ENCODE measurements at regions of chr11 and their contacts with region 1.

Region 1: DNA sequence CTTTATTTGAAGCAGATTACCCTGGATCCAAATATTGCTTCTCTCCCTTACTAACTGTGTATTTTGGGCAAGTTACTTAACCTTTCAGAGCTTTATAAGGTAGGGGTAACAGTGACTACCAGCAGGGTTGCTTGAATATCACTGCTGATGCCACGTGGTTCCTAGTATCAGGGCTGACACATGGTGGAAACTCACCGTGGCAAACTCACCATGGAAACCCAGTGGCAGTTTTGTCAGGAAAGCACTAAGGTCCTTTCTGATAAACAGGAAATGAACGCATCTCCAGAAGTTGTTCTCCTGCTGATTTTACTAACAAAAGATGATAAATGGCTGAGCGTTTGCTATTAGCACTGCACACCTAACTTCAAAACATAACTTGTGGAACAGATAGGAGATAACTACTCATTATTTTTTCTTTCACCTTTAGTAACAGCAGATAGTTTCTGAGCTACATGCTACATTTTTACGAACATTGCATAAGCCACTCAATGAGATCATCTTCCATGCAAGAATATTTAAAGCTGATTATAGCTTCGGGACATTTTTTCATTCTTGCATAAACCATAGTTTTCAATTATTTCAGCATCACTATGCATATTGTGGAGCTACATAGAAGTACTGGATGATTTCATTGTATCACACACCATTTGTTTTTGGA is 59.7 kb upstream of the RAG2 start:
- DNase-seq: no peak
- ATAC-seq: no peak
- H3K4me3 Mint-ChIP-seq: no peak overlapping the region
- H3K27ac Mint-ChIP-seq: no peak overlapping the region
- H3K4me1 Mint-ChIP-seq: no peaks in the 10 kb centered on the region
- H3K27me3 Mint-ChIP-seq: peaks cover 5% of the 10 kb centered on the region
- CTCF ChIP-seq: no peak

Region 2: DNA sequence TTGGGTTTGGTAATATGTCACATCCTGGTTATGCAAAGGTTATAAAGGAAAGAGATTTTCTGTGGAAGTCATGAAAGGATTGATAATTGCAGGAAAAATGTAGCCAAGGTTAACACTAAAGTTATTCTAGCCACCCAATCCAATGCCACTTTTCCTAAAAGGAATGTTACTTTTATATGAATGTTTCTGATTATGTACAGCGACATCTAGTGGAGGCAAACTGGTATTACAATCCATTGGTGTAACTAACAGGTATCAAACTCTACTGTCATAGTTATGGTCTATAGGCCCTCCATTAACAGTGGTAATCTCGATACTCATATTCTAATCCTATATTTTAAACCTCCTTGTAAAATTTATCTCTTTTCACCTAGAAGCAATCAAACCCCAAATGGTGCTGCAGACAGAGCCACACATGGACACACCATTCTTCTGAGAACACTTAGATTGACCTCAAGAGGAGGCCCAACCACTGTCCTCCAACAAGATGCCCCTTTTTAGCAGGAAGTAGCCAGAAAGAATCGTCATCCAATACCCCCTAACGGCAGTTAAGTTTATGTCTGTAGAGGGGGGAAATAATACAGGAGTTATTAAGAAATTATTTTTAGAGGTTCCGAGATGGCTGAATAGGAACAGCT is 15.2 kb after region 1 on chr11:
- CTCF ChIA-PET with region 1: interaction called, 12 read pairs
- POLR2A ChIA-PET with region 1: no interaction called
- intact Hi-C with region 1: no loop called
- DNase-seq: peak; percentile 4
- ATAC-seq: no peak
- H3K4me3 Mint-ChIP-seq: no peak overlapping the region
- H3K27ac Mint-ChIP-seq: no peak overlapping the region
- H3K4me1 Mint-ChIP-seq: no peaks in the 10 kb centered on the region
- H3K27me3 Mint-ChIP-seq: peaks cover 17% of the 10 kb centered on the region
- CTCF ChIP-seq: peak; percentile 93

Region 3: GRCh38 chr11:36976741-36977140 is 319.0 kb after region 1 on chr11:
- CTCF ChIA-PET with region 1: no interaction called
- POLR2A ChIA-PET with region 1: no interaction called
- intact Hi-C with region 1: no loop called
- DNase-seq: no peak
- ATAC-seq: no peak
- H3K4me3 Mint-ChIP-seq: no peak overlapping the region
- H3K27ac Mint-ChIP-seq: no peak overlapping the region
- H3K4me1 Mint-ChIP-seq: no peaks in the 10 kb centered on the region
- H3K27me3 Mint-ChIP-seq: no peaks in the 10 kb centered on the region
- CTCF ChIP-seq: no peak